Aorta (tissue), 5 donors: ENCODE measurements at regions of chr1 and their contacts with region 1.

Region 1: GRCh38 chr1:1231400-1232223 is at the start of gene SDF4:
- DNase-seq: peak; percentile 98 to 99
- ATAC-seq: peak; percentile 96
- H3K4me3 ChIP-seq: peak within 1 kb of the TSS; percentile 83 to 85
- H3K27ac ChIP-seq: peak within 1 kb of the TSS in 1 of 2 donors; percentile 73
- H3K4me1 ChIP-seq: no peaks in the 10 kb centered on the region
- H3K27me3 ChIP-seq: no peaks in the 10 kb centered on the region
- total RNA-seq, gene SDF4: 138 to 140 TPM

Region 2: DNA sequence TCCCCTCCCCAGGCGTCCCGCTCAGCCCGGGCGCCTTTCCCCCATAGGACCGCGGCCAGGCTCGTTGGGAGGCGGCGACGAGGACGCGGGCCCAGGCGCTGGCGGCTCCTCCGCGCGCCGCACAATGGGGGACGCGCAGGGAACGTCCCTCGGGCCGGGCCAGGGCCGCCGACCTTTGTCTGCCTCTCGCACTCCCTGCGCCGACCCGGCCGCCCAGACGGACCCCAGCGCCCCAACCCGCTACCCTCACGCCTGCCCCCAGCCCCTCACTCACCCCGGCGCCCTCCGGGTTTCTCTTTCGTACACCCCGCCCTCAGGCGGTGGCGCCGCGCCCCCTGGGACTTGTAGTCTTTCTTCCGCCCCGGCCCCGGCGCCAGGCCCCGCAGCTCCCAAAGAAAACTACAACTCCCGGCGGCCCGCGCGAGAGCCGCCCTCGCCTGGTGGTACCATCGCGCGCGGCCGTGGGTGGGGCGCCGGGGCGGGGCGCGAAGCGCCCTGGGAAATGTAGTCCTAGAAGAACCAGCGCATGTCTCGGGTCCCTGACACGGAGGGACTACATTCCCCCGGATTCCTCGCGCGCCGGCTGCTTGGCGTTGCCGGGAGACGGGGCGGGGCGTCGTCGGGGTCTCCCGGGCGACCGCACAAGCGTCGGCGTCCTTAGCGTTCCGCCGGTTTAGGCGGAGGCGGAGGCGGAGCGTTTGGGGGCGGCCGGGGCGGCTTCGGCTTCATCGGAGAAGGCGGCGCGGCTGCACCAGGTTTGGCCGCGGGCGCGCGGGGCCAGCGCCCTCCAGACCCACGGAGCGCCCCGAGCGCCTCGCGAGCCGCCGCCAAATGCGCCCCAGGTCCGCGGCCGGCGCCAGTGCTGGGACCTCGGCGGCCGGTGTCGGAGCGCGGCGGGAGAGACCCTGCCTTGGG is 115.6 kb before region 1 on chr1 and contains the start of gene C1orf159:
- intact Hi-C with region 1: loop called in 1 of 2 experiments (anchors 5 kb)
- DNase-seq: peak; percentile 99 to 100
- ATAC-seq: peak; percentile 99
- H3K4me3 ChIP-seq: peak within 1 kb of the TSS; percentile 90 to 95
- H3K27ac ChIP-seq: no peak within 1 kb of the TSS
- H3K4me1 ChIP-seq: no peaks in the 10 kb centered on the region
- H3K27me3 ChIP-seq: no peaks in the 10 kb centered on the region
- total RNA-seq, gene C1orf159: 9.3 to 13.6 TPM

Region 3: GRCh38 chr1:1599030-1599919 is 367.7 kb after region 1 on chr1:
- intact Hi-C with region 1: no loop called
- DNase-seq: no peak
- ATAC-seq: no peak
- H3K4me3 ChIP-seq: peak overlapping the region in 1 of 2 donors; percentile 23
- H3K27ac ChIP-seq: no peak overlapping the region
- H3K4me1 ChIP-seq: no peaks in the 10 kb centered on the region
- H3K27me3 ChIP-seq: no peaks in the 10 kb centered on the region